K562 (cell line): ENCODE measurements at regions of chr17 and their contacts with region 1.

Region 1: DNA sequence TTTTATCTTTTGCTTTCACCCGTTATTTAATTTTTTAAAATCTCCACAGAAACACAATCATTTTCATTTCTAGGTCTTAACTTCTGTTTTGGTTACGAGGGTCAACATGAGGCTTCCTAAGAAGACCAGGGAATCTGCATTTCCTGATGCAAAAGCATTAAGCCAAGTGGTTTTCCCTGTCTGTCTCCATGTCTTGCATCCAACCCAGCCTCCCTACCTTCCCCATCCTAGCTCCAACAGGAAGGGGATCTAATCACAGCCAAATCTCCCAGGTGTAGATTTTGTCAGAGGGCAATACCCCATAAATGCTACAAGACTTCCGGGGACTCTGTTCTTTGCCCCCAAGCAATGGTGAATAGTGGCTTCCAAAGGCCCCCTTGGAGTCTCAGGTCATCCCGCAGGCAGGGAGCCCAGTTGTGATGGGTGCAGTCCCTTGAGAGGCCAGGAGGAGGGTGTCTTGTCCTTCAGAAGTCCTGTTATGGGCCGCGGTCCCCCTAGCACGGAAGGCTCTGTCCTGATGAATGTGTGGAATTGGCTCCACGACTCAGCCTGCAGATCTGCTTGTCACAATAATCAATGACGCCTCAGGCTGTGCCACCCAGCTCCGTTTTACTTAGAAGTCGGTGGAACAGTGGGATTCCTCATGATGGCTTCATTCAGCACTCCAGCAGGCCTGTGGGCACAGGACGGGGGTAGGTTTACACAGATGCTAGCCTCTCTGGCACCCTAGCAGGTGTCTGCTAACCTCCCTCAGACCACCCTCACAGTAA is 141.1 kb downstream of the RGS9 start:
- DNase-seq: peak; percentile 50 to 70 (median 62)
- ATAC-seq: peak; percentile 93
- H3K4me3 ChIP-seq: no peak overlapping the region
- H3K27ac ChIP-seq: no peak overlapping the region
- H3K4me1 ChIP-seq: no peaks in the 10 kb centered on the region
- H3K27me3 ChIP-seq: peaks cover 12 to 38% of the 10 kb centered on the region in 2 experiments; a peak in 4 of 5 replicates
- CTCF ChIP-seq: peak; percentile 65 to 72 (median 69)
- EP300 ChIP-seq: no peak
- POLR2A ChIP-seq: no peak
- RAD21 ChIP-seq: peak; percentile 44 to 78

Region 2: GRCh38 chr17:65794572-65794971 is 516.3 kb after region 1 on chr17:
- CTCF ChIA-PET with region 1: no interaction called
- POLR2A ChIA-PET with region 1: no interaction called
- in situ Hi-C with region 1: no loop called
- intact Hi-C with region 1: loop called (anchors 5 kb)
- DNase-seq: peak; percentile 19 to 45 (median 37)
- ATAC-seq: 0 out of 3 replicates have a peak, but pooled peaks have one; percentile 53
- H3K4me3 ChIP-seq: no peak overlapping the region
- H3K27ac ChIP-seq: no peak overlapping the region
- H3K4me1 ChIP-seq: no peaks in the 10 kb centered on the region
- H3K27me3 ChIP-seq: no peaks in the 10 kb centered on the region
- CTCF ChIP-seq: peak; percentile 21 to 53 (median 49); a peak in 5 of 6 replicates
- EP300 ChIP-seq: no peak
- POLR2A ChIP-seq: no peak
- RAD21 ChIP-seq: peak; percentile 23 to 45; a peak in 3 of 4 replicates

Region 3: DNA sequence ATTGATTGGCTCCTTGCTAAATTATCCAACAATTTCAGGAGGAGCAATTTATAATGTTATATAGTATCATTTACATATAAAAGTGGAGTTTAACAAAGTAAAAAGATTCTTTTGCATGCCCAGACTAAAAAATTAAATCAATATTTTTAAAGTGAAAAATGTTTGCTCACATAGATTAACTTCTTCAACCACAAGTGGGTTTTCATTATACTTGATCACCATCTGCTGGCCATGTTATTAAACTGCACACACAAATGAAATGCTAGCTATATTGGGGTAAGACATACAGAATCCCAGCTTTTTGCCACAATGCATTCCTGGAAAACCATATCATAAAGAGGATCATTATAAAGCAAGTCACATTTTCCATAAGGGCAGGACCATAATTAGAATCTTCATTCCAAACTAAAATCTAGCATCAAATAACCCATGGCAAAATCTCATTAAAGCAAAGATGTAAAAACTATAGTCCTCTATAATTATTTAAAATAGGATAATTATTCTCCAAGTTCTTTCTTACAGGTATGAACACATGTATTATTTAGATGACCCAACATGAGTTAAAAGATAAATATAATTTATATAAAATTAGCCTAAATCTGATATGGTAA is 887.4 kb after region 1 on chr17:
- CTCF ChIA-PET with region 1: interaction called, 3 read pairs
- POLR2A ChIA-PET with region 1: no interaction called
- in situ Hi-C with region 1: no loop called
- intact Hi-C with region 1: loop called (anchors 2 kb)
- DNase-seq: peak; percentile 30 to 61 (median 50)
- ATAC-seq: 0 out of 3 replicates have a peak, but pooled peaks have one; percentile 62
- H3K4me3 ChIP-seq: no peak overlapping the region
- H3K27ac ChIP-seq: no peak overlapping the region
- H3K4me1 ChIP-seq: no peaks in the 10 kb centered on the region
- H3K27me3 ChIP-seq: peaks cover 3% of the 10 kb centered on the region in 2 experiments; a peak in 1 of 5 replicates
- CTCF ChIP-seq: peak; percentile 55 to 82 (median 58); a peak in 5 of 6 replicates
- EP300 ChIP-seq: no peak
- POLR2A ChIP-seq: no peak
- RAD21 ChIP-seq: peak; percentile 91 to 93